ENCODE measurements at regions of chr6 and their contacts with region 1.

Region 1: GRCh38 chr6:159098636-159099106 is 53.9 kb upstream of the TAGAP start:
- DNase-seq: peak; percentile 87
- H3K4me3 Mint-ChIP-seq: peak overlapping the region; percentile 63
- H3K27ac Mint-ChIP-seq: peak overlapping the region; percentile 95
- H3K4me1 Mint-ChIP-seq: peaks cover 94% of the 10 kb centered on the region
- H3K27me3 Mint-ChIP-seq: no peaks in the 10 kb centered on the region

Region 2: DNA sequence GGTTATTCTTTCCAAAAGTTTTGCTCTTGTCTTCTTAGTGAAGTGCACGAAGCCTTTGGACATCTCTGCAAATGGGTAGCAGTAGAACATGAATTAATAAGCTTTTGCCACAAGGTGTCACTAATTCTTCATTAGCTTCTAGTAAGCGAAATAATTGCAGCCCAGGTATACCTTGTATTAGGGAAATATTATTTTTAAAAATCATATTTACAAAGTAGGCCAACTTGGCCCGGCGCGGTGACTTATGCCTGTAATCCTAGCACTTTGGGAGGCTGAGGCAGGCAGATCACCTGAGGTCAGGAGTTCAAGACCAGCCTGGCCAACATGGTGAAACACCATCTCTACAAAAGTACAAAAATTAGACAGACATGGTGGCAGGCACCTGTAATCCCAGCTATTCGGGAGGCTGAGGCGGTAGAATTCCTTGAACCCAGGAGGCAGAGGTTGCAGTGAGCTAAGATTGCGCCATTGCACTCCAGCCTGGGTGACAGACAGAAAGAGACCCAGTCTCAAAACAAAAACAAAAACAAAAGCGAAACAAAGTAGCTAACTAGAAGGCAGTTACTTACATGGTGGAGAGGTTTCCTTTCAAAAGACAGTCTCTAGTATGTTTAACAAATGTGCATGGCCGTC is 89.9 kb before region 1 on chr6:
- CTCF ChIA-PET with region 1: interaction called, 130 read pairs
- intact Hi-C with region 1: no loop called
- DNase-seq: no peak
- H3K4me3 Mint-ChIP-seq: no peak overlapping the region
- H3K27ac Mint-ChIP-seq: no peak overlapping the region
- H3K4me1 Mint-ChIP-seq: peaks cover 29% of the 10 kb centered on the region
- H3K27me3 Mint-ChIP-seq: no peaks in the 10 kb centered on the region

Region 3: GRCh38 chr6:159017757-159018559 is 80.7 kb before region 1 on chr6:
- CTCF ChIA-PET with region 1: interaction called, 25 read pairs
- intact Hi-C with region 1: loop called (anchors 1 kb)
- DNase-seq: no peak
- H3K4me3 Mint-ChIP-seq: no peak overlapping the region
- H3K27ac Mint-ChIP-seq: peak overlapping the region; percentile 68
- H3K4me1 Mint-ChIP-seq: peaks cover 47% of the 10 kb centered on the region
- H3K27me3 Mint-ChIP-seq: no peaks in the 10 kb centered on the region

Region 4: DNA sequence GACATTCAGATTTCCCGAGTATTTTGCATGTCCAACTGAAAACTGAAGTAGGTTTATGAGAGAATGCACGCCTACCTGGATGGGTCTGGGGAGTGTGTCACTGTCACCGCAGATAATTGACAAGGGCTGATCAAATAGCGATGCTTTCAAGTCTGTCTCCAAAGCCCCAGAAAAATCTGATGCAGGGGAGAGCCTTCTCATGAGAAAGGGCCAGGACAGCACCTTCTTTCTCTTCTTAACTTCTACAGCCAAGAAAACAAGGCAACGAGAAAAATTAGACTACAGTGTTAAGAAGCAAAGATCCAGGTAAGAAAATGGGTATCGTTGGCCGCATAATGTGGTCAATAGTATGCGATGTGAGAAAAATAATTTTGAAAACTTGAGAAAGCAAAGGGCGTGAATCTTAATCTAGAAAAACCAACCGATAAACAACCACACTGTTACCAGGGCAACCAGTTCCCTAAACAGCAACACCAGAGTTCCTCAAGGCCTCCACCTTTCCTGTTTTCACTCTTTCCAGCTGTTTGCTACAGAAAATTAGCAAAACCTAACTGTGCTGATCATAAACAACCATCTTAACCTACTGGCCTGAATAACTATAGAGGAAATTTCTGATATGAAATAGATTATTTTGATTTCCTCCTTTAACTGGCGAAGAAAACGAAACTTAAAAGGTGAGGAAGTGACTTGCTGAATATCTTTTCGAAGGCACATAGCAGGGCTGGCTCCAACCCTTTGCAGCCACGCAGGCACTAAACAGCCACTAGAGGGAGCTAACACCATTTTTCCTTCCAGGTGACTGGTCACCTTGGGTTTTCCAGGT is 56.5 kb before region 1 on chr6:
- CTCF ChIA-PET with region 1: interaction called, 113 read pairs
- intact Hi-C with region 1: loop called (anchors 1 kb)
- DNase-seq: peak; percentile 86
- H3K4me3 Mint-ChIP-seq: peak overlapping the region; percentile 96
- H3K27ac Mint-ChIP-seq: peak overlapping the region; percentile 98
- H3K4me1 Mint-ChIP-seq: peaks cover 69% of the 10 kb centered on the region
- H3K27me3 Mint-ChIP-seq: no peaks in the 10 kb centered on the region

Region 5: DNA sequence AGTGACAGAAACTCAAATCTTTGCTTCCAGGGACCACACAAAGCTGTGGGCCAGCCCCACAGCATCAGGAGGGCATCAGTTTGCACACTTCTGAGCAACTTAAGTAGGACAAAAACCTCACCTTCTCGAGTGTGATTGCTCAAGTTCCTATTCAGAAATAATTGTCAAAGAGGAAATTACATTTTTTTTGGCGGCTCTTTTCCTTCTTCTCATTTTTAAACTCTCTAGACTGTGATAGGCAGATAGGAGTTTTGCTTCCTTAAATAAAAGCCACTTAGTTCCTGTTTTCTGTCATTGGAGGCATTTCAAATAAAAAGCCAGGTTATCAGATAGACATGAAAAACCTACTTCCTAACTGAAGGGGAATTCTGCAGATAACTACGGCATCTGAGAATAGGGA is 42.7 kb before region 1 on chr6:
- CTCF ChIA-PET with region 1: interaction called, 26 read pairs
- intact Hi-C with region 1: loop called (anchors 1 kb)
- DNase-seq: peak; percentile 41
- H3K4me3 Mint-ChIP-seq: peak overlapping the region; percentile 22
- H3K27ac Mint-ChIP-seq: peak overlapping the region; percentile 91
- H3K4me1 Mint-ChIP-seq: peaks cover 60% of the 10 kb centered on the region
- H3K27me3 Mint-ChIP-seq: no peaks in the 10 kb centered on the region

Region 6: DNA sequence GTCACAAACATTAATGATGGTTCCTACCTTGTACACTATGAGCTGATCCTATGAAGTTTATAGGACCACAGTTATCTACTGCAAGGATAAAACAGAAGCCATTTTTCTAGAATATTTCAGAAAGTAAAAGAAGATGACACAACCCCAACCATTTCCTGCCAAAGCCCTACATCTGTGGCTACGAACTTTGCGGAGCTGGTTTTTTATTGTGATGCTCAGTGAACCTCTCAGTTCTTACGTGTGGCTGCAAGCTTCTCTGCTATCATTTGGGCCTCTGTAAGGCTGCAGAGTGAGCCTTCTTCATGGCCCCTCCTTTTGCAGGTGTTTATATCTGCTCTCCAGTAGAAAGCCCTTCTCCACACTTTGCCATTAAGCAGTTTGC is 36.1 kb before region 1 on chr6:
- CTCF ChIA-PET with region 1: interaction called, 26 read pairs
- intact Hi-C with region 1: loop called (anchors 1 kb)
- DNase-seq: peak; percentile 77
- H3K4me3 Mint-ChIP-seq: peak overlapping the region; percentile 6
- H3K27ac Mint-ChIP-seq: peak overlapping the region; percentile 91
- H3K4me1 Mint-ChIP-seq: peaks cover 95% of the 10 kb centered on the region
- H3K27me3 Mint-ChIP-seq: no peaks in the 10 kb centered on the region

Region 7: GRCh38 chr6:159080217-159080976 is 18.3 kb before region 1 on chr6:
- CTCF ChIA-PET with region 1: interaction called, 22 read pairs
- intact Hi-C with region 1: loop called (anchors 1 kb)
- DNase-seq: peak; percentile 79
- H3K4me3 Mint-ChIP-seq: peak overlapping the region; percentile 9
- H3K27ac Mint-ChIP-seq: peak overlapping the region; percentile 89
- H3K4me1 Mint-ChIP-seq: peaks cover 49% of the 10 kb centered on the region
- H3K27me3 Mint-ChIP-seq: no peaks in the 10 kb centered on the region

Measured in activated naive CD4-positive, alpha-beta T cell treated with anti-CD3 and anti-CD28 coated beads for 36 hours (primary cell).